ENCODE measurements at regions of chr20 and their contacts with region 1.

Region 1: DNA sequence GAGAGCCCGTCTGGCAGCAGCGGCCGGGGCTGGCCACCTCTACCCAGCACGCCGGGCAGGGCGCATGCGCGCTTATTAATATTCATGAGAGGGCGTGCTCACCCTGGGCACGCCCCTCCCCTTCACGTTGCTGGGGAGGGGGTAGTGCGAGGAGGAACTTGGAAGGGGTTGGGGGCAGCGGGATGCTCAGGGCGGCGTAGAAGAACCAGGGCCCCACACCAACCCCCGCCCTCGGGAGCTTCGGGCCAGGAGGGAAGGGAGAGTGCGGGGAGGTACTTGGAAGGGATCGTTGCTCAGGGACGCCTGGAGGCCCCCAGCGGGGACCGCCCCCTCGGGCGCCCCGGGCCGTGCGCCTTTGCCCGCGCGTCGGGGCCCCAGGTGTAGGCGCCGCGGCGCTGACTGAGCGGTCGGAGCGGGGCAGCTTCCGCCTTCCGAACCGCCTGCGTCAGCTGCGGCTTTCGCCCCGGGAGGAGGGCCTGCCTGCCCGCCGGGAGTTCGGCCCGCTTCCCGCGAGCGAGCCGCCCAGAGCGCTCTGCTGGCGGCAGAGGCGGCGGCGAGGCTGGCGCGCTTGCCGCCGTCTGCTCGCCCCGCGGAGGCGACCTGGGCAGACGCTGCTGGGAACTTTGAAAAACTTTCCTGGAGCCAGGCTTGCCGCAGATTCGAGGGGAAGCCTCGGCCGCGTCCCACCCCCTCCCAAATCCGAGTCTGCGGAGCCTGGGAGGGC is at the start of gene JAG1:
- DNase-seq: peak; percentile 79 to 97
- H3K4me3 ChIP-seq: peak within 1 kb of the TSS; percentile 84
- H3K27ac ChIP-seq: peak within 1 kb of the TSS; percentile 97
- H3K4me1 ChIP-seq: peaks cover 16% of the 10 kb centered on the region
- H3K27me3 ChIP-seq: no peaks in the 10 kb centered on the region
- CTCF ChIP-seq: no peak
- total RNA-seq, gene JAG1: 42.9 and 51.5 TPM in 2 replicates

Region 2: DNA sequence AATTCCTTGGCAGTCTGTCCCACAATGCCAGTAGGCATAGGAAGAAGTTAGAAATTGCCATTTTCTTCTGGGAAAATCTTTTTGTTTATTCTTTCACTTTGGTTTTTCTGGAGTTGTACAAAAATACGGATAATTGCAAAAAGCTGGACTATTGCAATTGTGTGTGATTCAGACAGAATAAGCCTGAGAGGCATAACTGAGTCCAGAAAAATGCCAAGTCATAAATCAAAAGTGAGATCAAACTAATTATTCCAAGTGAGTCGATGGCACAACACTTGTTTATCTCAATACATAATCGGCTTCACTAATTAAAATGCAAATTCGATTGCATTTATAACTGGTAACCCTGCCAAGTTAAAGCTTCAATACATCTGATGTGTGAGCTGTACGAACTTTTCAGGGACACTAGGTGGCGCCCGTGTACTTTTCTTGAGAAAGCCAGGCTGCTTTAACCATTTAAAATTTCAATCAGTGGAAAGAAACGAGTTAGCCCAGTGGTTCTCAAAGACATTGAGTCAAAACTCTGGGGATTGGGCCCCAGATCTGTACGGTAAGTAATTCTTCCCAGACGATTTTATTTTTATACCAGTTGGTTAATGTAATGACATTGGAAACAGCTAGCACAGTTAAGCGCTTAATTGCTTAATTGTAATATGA is 1057.2 kb before region 1 on chr20:
- CTCF ChIA-PET with region 1: no interaction called
- POLR2A ChIA-PET with region 1: no interaction called
- intact Hi-C with region 1: loop called (anchors 5 kb)
- DNase-seq: peak; percentile 31 to 42
- H3K4me3 ChIP-seq: no peak overlapping the region; the same call in 1 of the 2 replicates
- H3K27ac ChIP-seq: no peak overlapping the region
- H3K4me1 ChIP-seq: no peaks in the 10 kb centered on the region
- H3K27me3 ChIP-seq: no peaks in the 10 kb centered on the region; the same call in 1 of the 2 replicates
- CTCF ChIP-seq: peak; percentile 90

Region 3: GRCh38 chr20:10536531-10536930 is 137.6 kb before region 1 on chr20:
- CTCF ChIA-PET with region 1: no interaction called
- POLR2A ChIA-PET with region 1: no interaction called
- intact Hi-C with region 1: no loop called
- DNase-seq: peak; percentile 30 to 45
- H3K4me3 ChIP-seq: no peak overlapping the region
- H3K27ac ChIP-seq: no peak overlapping the region
- H3K4me1 ChIP-seq: peaks cover 50% of the 10 kb centered on the region
- H3K27me3 ChIP-seq: no peaks in the 10 kb centered on the region
- CTCF ChIP-seq: peak; percentile 64

Region 4: GRCh38 chr20:10553326-10553984 is 120.7 kb before region 1 on chr20:
- CTCF ChIA-PET with region 1: no interaction called
- POLR2A ChIA-PET with region 1: no interaction called
- intact Hi-C with region 1: loop called (anchors 1 kb)
- DNase-seq: peak; percentile 51 to 60
- H3K4me3 ChIP-seq: no peak overlapping the region
- H3K27ac ChIP-seq: no peak overlapping the region
- H3K4me1 ChIP-seq: peaks cover 29% of the 10 kb centered on the region
- H3K27me3 ChIP-seq: no peaks in the 10 kb centered on the region
- CTCF ChIP-seq: peak; percentile 87

Region 5: GRCh38 chr20:10848810-10849370 is 174.7 kb after region 1 on chr20:
- CTCF ChIA-PET with region 1: no interaction called
- POLR2A ChIA-PET with region 1: no interaction called
- intact Hi-C with region 1: loop called (anchors 1 kb)
- DNase-seq: peak; percentile 49 to 71
- H3K4me3 ChIP-seq: no peak overlapping the region
- H3K27ac ChIP-seq: no peak overlapping the region
- H3K4me1 ChIP-seq: peaks cover 10% of the 10 kb centered on the region; the same call in 1 of the 2 replicates
- H3K27me3 ChIP-seq: no peaks in the 10 kb centered on the region
- CTCF ChIP-seq: no peak

Region 6: GRCh38 chr20:11098888-11099287 is 424.7 kb after region 1 on chr20:
- CTCF ChIA-PET with region 1: no interaction called
- POLR2A ChIA-PET with region 1: no interaction called
- intact Hi-C with region 1: loop called (anchors 5 kb)
- DNase-seq: no peak
- H3K4me3 ChIP-seq: no peak overlapping the region
- H3K27ac ChIP-seq: no peak overlapping the region
- H3K4me1 ChIP-seq: 0 out of 2 replicates have a peak, but pooled peaks cover 6% of the 10 kb centered on the region
- H3K27me3 ChIP-seq: no peaks in the 10 kb centered on the region
- CTCF ChIP-seq: peak; percentile 31; the same call in 1 of the 2 replicates

Region 7: GRCh38 chr20:11274141-11274594 is 600.0 kb after region 1 on chr20:
- CTCF ChIA-PET with region 1: no interaction called
- POLR2A ChIA-PET with region 1: no interaction called
- intact Hi-C with region 1: loop called (anchors 1 kb)
- DNase-seq: peak; percentile 30 to 61
- H3K4me3 ChIP-seq: no peak overlapping the region
- H3K27ac ChIP-seq: no peak overlapping the region
- H3K4me1 ChIP-seq: peaks cover 3% of the 10 kb centered on the region; the same call in 1 of the 2 replicates
- H3K27me3 ChIP-seq: no peaks in the 10 kb centered on the region
- CTCF ChIP-seq: peak; percentile 76